AG04450 (cell line): ENCODE measurements at regions of chr11 and their contacts with region 1.

Region 1: DNA sequence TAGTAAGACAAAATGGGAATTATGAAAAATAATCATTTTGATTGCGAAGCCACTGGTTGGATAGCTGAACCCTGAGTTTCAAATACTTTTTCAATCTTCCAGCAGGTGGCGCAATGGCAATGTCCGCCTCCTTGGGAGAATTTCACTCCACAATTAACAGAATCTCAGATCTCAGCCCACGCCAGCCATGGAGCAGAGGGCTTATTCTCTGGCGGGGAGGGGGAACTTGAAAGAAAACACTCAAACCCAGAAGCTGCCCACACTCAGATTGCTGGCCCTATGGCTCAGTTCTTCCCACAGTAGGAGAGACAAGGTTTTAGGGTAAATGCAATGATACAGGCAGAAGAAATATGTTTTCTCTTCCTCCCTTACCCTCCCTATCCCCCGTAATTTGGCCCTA is 38.7 kb upstream of the RCN1 start:
- DNase-seq: peak; percentile 15
- H3K4me3 ChIP-seq: no peak overlapping the region
- H3K27ac ChIP-seq: no peak overlapping the region
- H3K27me3 ChIP-seq: peaks cover 27% of the 10 kb centered on the region
- CTCF ChIP-seq: peak; percentile 73

Region 2: DNA sequence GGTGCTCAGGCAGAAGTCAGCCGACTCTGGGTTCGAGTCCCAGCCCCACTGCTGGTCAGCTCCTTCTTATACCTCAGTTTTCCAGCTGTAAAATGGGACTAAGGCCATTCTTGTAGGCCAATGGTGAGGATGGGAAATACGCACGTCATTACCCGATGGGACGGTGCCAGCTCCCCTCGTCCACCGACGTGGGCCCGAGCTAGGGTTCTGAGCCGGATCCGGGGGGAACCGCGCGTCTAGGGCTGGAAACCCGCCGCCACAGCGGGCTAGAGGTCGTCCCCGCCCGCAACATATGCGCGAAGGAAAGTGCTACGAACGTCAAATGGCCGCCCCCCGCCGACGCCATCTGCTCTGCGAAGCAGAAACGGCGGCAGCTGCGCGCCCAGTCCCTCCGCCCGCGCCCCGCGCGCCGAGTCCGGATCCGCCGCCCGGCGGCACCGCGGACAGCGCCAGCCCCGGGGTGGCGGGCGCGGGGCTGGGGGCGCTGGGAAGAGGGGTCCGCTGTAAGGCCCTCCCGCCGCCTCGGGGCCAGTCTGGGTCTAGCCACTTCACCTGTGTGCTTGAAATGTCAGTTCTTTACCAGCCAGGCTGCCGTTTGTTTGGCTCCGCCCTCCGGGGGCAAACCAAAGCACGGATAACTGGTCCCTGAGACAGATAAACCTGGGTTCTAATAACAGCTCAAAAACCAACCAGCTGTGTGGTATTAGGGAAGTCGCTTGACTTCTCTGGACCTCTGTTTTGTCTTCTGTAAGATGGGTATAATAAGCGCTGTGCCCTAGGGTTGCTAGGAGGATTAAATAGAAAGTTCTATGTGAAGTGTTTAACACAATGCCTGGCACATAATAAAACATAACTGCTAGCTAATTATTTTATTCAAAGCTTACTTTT is 64.9 kb before region 1 on chr11:
- CTCF ChIA-PET with region 1: interaction called, 13 read pairs
- POLR2A ChIA-PET with region 1: no interaction called
- DNase-seq: no peak
- H3K4me3 ChIP-seq: no peak overlapping the region
- H3K27ac ChIP-seq: no peak overlapping the region
- H3K27me3 ChIP-seq: peaks cover 44% of the 10 kb centered on the region
- CTCF ChIP-seq: no peak

Region 3: DNA sequence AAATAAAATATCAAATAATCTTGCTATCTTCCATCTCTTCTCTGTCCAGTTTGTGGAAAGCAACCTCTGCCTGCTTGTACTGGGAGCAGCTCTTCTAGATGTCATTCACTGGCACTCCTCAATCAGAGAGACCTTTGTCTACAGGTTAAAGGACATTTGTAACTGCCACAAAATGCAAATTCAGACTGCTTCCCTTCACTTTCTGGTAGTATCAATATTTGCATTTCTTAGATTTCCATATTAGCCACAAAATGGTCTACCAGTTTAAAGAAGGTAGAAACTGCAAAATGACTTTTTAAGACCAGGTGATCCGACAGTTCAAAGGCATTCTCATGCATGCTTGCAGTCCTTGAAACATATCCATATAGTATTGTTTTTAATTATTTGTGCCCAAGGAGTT is 13.1 kb before region 1 on chr11:
- CTCF ChIA-PET with region 1: interaction called, 17 read pairs
- POLR2A ChIA-PET with region 1: no interaction called
- DNase-seq: no peak
- H3K4me3 ChIP-seq: no peak overlapping the region
- H3K27ac ChIP-seq: no peak overlapping the region
- H3K27me3 ChIP-seq: peaks cover 4% of the 10 kb centered on the region
- CTCF ChIP-seq: no peak

Region 4: GRCh38 chr11:32088117-32088941 is 36.1 kb after region 1 on chr11:
- CTCF ChIA-PET with region 1: interaction called, 12 read pairs
- POLR2A ChIA-PET with region 1: no interaction called
- DNase-seq: peak; percentile 62
- H3K4me3 ChIP-seq: peak overlapping the region; percentile 28; the same call in 1 of the 2 replicates
- H3K27ac ChIP-seq: peak overlapping the region; percentile 66
- H3K27me3 ChIP-seq: no peaks in the 10 kb centered on the region
- CTCF ChIP-seq: no peak

Region 5: GRCh38 chr11:32162351-32162750 is 110.1 kb after region 1 on chr11:
- CTCF ChIA-PET with region 1: interaction called, 36 read pairs
- POLR2A ChIA-PET with region 1: no interaction called
- DNase-seq: no peak
- H3K4me3 ChIP-seq: no peak overlapping the region
- H3K27ac ChIP-seq: no peak overlapping the region
- H3K27me3 ChIP-seq: peaks cover 35% of the 10 kb centered on the region
- CTCF ChIP-seq: no peak

Region 6: DNA sequence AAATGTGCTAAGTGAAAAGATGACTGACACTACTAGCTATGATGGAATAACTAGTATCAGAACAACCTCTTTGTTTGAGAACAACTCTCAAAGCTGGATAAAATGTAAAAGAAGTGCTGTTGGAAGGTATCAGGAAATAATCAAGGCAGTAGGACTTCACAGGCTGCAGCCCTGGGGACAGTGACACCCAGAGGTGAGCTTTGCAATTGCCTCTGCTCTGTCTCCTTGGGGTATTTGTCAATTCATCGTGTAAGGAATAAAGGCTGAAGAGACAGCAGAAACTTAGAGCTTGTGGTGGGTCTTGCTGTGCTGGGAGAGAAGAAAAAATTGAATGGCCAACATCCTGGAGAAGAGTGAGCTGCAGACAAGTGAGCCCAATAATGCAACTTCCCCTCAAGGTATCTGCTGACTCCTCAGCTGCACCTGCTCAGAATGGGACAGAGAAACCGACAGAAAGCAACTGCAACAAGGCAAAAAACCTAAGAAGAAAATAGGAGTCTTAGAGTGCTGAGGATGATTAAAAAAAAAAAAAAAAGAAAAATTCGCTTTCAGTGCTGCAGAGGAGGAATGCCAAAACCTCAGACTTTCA is 179.8 kb after region 1 on chr11:
- CTCF ChIA-PET with region 1: no interaction called
- POLR2A ChIA-PET with region 1: no interaction called
- DNase-seq: no peak
- H3K4me3 ChIP-seq: no peak overlapping the region
- H3K27ac ChIP-seq: no peak overlapping the region
- H3K27me3 ChIP-seq: no peaks in the 10 kb centered on the region
- CTCF ChIP-seq: peak; percentile 68

Region 7: GRCh38 chr11:32288276-32288675 is 236.1 kb after region 1 on chr11:
- CTCF ChIA-PET with region 1: no interaction called
- POLR2A ChIA-PET with region 1: no interaction called
- DNase-seq: no peak
- H3K4me3 ChIP-seq: no peak overlapping the region
- H3K27ac ChIP-seq: no peak overlapping the region
- H3K27me3 ChIP-seq: no peaks in the 10 kb centered on the region
- CTCF ChIP-seq: 0 out of 2 replicates have a peak, but pooled peaks have one; percentile 6